Panc1 (cell line): ENCODE measurements at regions of chrX and their contacts with region 1.

Region 1: GRCh38 chrX:109511113-109511512 is 25.5 kb upstream of the NXT2 start:
- DNase-seq: no peak
- ATAC-seq: no peak
- H3K4me3 ChIP-seq: no peak overlapping the region
- H3K27ac ChIP-seq: no peak overlapping the region
- H3K4me1 ChIP-seq: no peaks in the 10 kb centered on the region
- H3K27me3 ChIP-seq: 0 out of 2 replicates have a peak, but pooled peaks cover 2% of the 10 kb centered on the region
- CTCF ChIP-seq: no peak

Region 2: GRCh38 chrX:109485470-109486340 is 25.4 kb before region 1 on chrX:
- CTCF ChIA-PET with region 1: no interaction called
- POLR2A ChIA-PET with region 1: no interaction called
- in situ Hi-C with region 1: no loop called
- intact Hi-C with region 1: no loop called
- DNase-seq: peak; percentile 64
- ATAC-seq: peak; percentile 63
- H3K4me3 ChIP-seq: no peak overlapping the region
- H3K27ac ChIP-seq: no peak overlapping the region
- H3K4me1 ChIP-seq: no peaks in the 10 kb centered on the region
- H3K27me3 ChIP-seq: no peaks in the 10 kb centered on the region; the same call in 1 of the 2 replicates
- CTCF ChIP-seq: peak; percentile 92

Region 3: DNA sequence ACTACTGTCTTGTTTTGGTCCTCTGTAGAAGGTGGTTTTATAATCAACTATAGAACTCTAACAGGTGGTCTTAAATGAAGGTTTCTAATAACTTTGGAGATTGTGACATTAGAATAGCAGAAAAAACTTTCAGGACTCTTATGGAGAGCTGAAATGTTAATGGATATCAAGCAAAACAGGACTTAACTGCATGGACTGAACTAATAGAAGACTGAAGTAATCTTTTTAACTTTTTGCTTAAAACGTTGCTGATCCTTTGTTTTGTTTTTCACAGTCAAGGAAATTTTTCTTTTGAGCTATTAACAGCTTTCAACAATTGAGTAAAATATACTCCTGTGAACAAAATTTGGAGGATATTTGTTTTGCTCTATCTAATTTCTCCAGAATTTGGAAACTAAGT is 42.7 kb after region 1 on chrX:
- CTCF ChIA-PET with region 1: no interaction called
- POLR2A ChIA-PET with region 1: no interaction called
- in situ Hi-C with region 1: no loop called
- intact Hi-C with region 1: loop called (anchors 1 kb)
- DNase-seq: no peak
- ATAC-seq: no peak
- H3K4me3 ChIP-seq: no peak overlapping the region
- H3K27ac ChIP-seq: no peak overlapping the region
- H3K4me1 ChIP-seq: no peaks in the 10 kb centered on the region
- H3K27me3 ChIP-seq: no peaks in the 10 kb centered on the region
- CTCF ChIP-seq: no peak